ENCODE measurements at regions of chr4 and their contacts with region 1.

Region 1: GRCh38 chr4:156830351-156830750 is 141.2 kb downstream of the PDGFC start:
- DNase-seq: no peak
- H3K4me3 ChIP-seq: no peak overlapping the region
- H3K27ac ChIP-seq: peak overlapping the region in 1 of 4 donors; percentile 72
- H3K4me1 ChIP-seq: peaks cover 0 to 30% (median 17%) of the 10 kb centered on the region in 4 donors
- H3K27me3 ChIP-seq: no peaks in the 10 kb centered on the region
- CTCF ChIP-seq: no peak
- EP300 ChIP-seq: no peak
- POLR2A ChIP-seq: no peak

Region 2: DNA sequence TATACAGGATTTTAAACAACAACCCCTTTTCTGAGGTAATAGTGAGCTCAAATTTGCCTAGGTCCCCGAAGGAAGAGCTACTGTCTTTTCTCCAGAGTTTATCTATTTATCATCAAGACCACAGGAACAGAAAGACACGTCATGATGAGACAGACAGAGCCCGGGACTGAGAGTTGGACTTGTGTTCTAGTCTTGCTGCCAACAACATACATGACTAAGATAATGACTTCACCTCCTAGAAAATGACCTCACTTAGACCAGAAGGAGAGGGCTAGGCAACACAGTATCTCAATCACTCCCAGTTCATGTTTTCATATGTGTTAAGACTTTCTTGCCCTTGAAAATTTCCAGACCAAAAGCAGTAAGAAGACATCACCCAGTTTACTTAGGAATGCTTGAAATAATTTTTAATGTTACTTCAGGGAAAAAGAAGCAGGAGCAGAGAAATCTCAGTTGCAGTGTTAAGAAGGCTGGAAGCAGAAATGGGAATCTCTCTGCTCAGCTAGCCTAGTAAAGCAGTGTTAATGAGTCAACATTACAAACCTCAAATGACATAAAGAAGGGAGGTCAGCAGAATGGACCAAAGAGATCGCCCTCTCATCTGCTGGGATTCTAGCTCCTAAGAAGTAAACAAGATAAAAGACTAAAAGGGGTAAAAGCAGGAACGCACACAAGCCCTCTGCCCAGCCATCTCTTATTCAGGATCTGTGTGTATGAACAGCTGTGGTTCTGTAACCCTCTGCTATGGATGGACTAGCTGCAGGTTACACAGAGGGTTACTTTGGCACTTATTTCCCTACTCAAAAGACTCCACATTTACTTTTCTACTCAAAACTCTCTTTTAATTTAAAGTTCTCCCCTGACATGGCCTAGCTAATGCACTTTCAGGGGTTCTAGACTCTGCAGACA is 116.4 kb after region 1 on chr4:
- intact Hi-C with region 1: loop called (anchors 5 kb)
- DNase-seq: peak; percentile 79
- H3K4me3 ChIP-seq: no peak overlapping the region
- H3K27ac ChIP-seq: peak overlapping the region; percentile 46 to 83 (median 74)
- H3K4me1 ChIP-seq: peaks cover 0 to 95% (median 84%) of the 10 kb centered on the region in 4 donors
- H3K27me3 ChIP-seq: no peaks in the 10 kb centered on the region
- CTCF ChIP-seq: no peak
- EP300 ChIP-seq: no peak
- POLR2A ChIP-seq: no peak

Region 3: DNA sequence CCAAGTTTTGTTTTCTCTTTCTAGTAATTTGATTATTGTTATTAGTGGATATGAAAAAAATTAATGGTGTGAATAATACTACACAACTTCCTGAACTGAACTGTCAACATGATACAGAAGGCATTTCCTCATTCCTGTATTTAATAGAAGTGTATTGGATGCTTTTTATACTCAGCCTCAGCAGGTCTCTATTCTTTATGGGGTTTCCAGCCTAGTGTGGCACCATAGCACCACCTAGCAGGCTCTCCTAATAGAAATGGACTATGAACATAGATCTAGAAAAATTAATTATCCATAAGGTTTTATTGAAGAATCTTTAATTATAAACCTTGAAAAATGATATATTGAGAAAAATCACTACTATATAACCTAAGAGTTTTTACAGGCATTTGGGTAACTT is 298.0 kb after region 1 on chr4:
- intact Hi-C with region 1: no loop called
- DNase-seq: no peak
- H3K4me3 ChIP-seq: no peak overlapping the region
- H3K27ac ChIP-seq: no peak overlapping the region
- H3K4me1 ChIP-seq: no peaks in the 10 kb centered on the region
- H3K27me3 ChIP-seq: no peaks in the 10 kb centered on the region
- CTCF ChIP-seq: peak in 2 of 4 experiments; percentile 11 to 28
- EP300 ChIP-seq: no peak
- POLR2A ChIP-seq: no peak

Region 4: GRCh38 chr4:158020176-158020575 is 1189.8 kb after region 1 on chr4:
- intact Hi-C with region 1: loop called (anchors 5 kb)
- DNase-seq: peak; percentile 80
- H3K4me3 ChIP-seq: no peak overlapping the region
- H3K27ac ChIP-seq: peak overlapping the region; percentile 68 to 84 (median 74)
- H3K4me1 ChIP-seq: peaks cover 0 to 51% (median 36%) of the 10 kb centered on the region in 4 donors
- H3K27me3 ChIP-seq: no peaks in the 10 kb centered on the region
- CTCF ChIP-seq: no peak
- EP300 ChIP-seq: peak; percentile 68 to 85 (median 73)
- POLR2A ChIP-seq: no peak

Measured in sigmoid colon (tissue), 7 donors.